A673 (cell line): ENCODE measurements at regions of chr3 and their contacts with region 1.

Region 1: DNA sequence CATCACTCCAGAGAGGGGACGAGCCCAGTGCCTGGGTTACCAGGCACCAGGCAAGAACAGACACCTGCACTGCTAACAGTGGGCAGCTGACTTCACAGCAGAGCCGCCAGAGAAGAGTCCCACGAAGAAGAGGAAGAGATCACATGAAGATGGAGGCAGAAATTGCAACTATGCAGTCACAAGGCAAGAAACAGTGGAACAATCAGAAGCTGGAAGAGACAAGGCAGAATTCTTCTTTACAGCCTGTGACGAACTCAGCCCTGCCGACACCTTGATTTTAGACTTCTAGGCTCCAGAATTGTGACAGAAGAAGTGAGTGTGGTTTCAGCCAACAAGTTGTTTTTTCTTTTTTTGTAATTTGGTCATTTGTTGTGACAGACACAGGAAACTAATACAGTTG is 59.2 kb downstream of the IL12A start:
- DNase-seq: no peak
- H3K4me3 ChIP-seq: no peak overlapping the region
- H3K27ac ChIP-seq: no peak overlapping the region
- H3K4me1 ChIP-seq: no peaks in the 10 kb centered on the region
- H3K27me3 ChIP-seq: no peaks in the 10 kb centered on the region
- CTCF ChIP-seq: no peak

Region 2: DNA sequence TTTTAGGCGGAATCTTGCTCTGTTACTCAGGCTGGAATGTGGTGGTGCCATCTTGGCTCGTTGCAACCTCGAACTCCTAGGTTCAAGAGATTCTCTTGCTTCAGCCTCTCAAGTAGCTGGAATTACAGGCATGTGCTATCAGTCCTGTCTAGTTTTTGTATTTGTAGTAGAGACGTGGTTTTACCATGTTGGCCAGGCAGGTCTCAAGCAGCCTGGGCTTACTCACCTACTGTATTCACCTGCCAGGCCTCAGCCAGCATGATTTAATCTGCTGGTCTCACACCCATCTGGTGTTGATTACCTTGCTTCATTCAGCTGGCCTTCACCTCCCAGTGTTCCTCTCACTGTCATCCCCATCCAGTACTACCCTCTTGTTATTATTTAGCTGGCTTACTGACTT is 42.8 kb after region 1 on chr3:
- CTCF ChIA-PET with region 1: no interaction called
- POLR2A ChIA-PET with region 1: interaction called, 11 read pairs
- intact Hi-C with region 1: no loop called
- DNase-seq: no peak
- H3K4me3 ChIP-seq: no peak overlapping the region
- H3K27ac ChIP-seq: no peak overlapping the region
- H3K4me1 ChIP-seq: no peaks in the 10 kb centered on the region
- H3K27me3 ChIP-seq: no peaks in the 10 kb centered on the region
- CTCF ChIP-seq: no peak

Region 3: DNA sequence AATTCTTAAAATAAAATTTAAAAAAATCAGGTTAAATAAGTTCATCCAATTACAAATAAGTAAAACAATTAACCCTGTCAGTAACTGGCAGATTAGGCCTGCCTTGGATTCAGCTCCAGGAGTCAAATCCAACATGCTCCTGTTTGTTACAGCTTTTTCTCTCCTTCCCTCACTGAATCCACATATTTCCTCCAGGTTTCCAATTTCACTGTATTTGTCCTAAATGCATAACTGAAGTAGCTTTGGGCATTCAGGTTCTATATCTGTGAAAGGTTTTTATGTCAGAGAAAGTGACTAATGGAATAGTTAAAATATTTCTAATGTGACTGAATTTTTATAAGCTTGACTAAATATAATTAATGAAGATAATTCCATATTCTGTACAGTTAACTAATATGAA is 271.4 kb after region 1 on chr3:
- CTCF ChIA-PET with region 1: no interaction called
- POLR2A ChIA-PET with region 1: no interaction called
- intact Hi-C with region 1: no loop called
- DNase-seq: no peak
- H3K4me3 ChIP-seq: no peak overlapping the region
- H3K27ac ChIP-seq: no peak overlapping the region
- H3K4me1 ChIP-seq: no peaks in the 10 kb centered on the region
- H3K27me3 ChIP-seq: no peaks in the 10 kb centered on the region
- CTCF ChIP-seq: no peak